T-cell (primary cell): ENCODE measurements at regions of chr5 and their contacts with region 1.

Region 1: DNA sequence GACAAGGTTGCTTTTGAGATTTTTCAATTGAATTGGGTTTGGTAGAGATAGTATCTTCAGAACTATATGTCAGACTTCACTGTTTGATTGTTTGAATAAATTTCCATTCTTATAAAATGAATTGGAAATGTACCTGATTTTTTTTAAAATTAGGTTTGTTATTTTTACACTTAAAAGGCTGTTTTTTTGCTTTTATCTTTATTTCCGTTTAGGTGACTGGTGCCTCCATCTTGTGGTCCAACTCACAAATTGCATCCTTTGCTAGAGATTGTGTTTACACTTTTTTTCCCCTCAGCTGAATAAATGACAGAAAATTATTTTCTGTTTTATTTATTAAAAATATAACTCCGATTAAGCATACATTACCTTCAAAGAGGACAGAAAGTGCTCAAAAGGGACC is 15.6 kb downstream of the NDUFAF2 start:
- DNase-seq: peak in 6 of 35 experiments; percentile 4 to 44 (median 7)
- ATAC-seq: peak in 1 of 4 experiments; percentile 46
- H3K4me3 ChIP-seq: no peak overlapping the region
- H3K4me3 Mint-ChIP-seq: no peak overlapping the region
- H3K27ac ChIP-seq: no peak overlapping the region
- H3K27ac Mint-ChIP-seq: no peak overlapping the region
- H3K4me1 ChIP-seq: peaks cover 0 to 2% of the 10 kb centered on the region in 2 experiments
- H3K4me1 Mint-ChIP-seq: peaks cover 6 to 22% (median 12%) of the 10 kb centered on the region in 3 donors
- H3K27me3 ChIP-seq: no peaks in the 10 kb centered on the region
- H3K27me3 Mint-ChIP-seq: no peaks in the 10 kb centered on the region

Region 2: GRCh38 chr5:60903356-60903755 is 57.2 kb before region 1 on chr5:
- CTCF ChIA-PET with region 1: no interaction called
- POLR2A ChIA-PET with region 1: no interaction called
- DNase-seq: no peak
- ATAC-seq: no peak
- H3K4me3 ChIP-seq: no peak overlapping the region
- H3K4me3 Mint-ChIP-seq: no peak overlapping the region
- H3K27ac ChIP-seq: no peak overlapping the region
- H3K27ac Mint-ChIP-seq: no peak overlapping the region
- H3K4me1 ChIP-seq: no peaks in the 10 kb centered on the region
- H3K4me1 Mint-ChIP-seq: no peaks in the 10 kb centered on the region
- H3K27me3 ChIP-seq: no peaks in the 10 kb centered on the region
- H3K27me3 Mint-ChIP-seq: no peaks in the 10 kb centered on the region

Region 3: GRCh38 chr5:60944904-60945812 is 15.4 kb before region 1 on chr5 and contains the starts of genes ERCC8 and NDUFAF2:
- CTCF ChIA-PET with region 1: interaction called, 12 to 14 read pairs
- POLR2A ChIA-PET with region 1: interaction called in 1 of 2 experiments, 4 read pairs
- DNase-seq: peak; percentile 73 to 92 (median 84)
- ATAC-seq: peak; percentile 97 to 98 (median 98)
- H3K4me3 ChIP-seq: peak within 1 kb of the TSS; percentile 92
- H3K4me3 Mint-ChIP-seq: no peak within 1 kb of the TSS
- H3K27ac ChIP-seq: peak within 1 kb of the TSS; percentile 60
- H3K27ac Mint-ChIP-seq: peak within 1 kb of the TSS in 1 of 2 donors; percentile 59
- H3K4me1 ChIP-seq: peaks cover 8 to 13% of the 10 kb centered on the region in 2 experiments
- H3K4me1 Mint-ChIP-seq: peaks cover 26 to 34% (median 33%) of the 10 kb centered on the region in 3 donors
- H3K27me3 ChIP-seq: no peaks in the 10 kb centered on the region
- H3K27me3 Mint-ChIP-seq: no peaks in the 10 kb centered on the region
- total RNA-seq, gene ERCC8: 6.8 to 10.1 (median 7.3) TPM
- total RNA-seq, gene NDUFAF2: 10.8 to 18.4 (median 18.0) TPM